ENCODE measurements at regions of chr17 and their contacts with region 1.

Region 1: DNA sequence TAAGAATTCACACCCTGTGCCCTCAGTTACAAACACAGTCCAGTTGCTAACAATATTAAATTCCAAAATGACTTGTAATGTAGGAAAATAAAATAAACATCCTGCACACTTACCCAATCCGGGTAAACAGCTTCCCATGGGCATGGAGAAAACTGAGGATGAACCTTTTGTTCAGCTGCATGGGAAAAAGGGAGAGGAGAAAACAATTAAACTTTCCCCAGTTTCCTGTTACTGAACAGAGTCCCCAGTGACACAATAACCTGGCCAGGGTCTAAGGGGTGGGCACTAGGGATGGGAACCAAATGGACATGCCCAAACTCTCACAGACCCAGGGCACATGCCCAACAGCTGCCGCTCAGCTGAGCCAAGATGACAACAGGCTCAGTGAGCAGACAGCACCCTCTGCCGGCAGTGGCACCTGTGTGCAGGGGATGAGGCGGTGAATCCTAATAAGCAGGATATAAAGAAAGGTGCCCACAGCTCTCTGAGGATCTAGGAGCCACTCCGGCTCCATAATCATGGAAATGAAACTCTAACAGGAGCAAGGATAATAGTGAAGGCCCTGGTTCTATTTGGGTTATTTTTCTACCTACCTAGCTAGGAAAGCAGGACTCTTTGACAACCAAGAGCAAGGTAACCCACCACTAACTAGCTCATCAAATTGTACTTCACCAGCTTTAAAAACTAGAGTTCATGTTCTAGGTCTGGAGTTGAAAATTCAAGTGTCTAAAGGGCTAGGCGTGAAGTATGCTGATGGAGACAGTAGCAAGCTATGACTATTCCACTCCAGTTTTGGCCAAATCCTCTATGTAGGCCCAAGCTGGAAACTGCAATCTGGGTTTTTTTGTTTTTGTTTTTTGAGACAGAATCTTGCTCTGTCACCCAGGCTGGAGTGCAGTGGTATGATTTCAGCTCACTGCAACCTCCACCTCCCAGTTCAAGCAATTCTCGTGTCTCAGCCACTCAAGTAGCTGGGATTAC is 58.8 kb downstream of the SMG6 start:
- DNase-seq: peak; percentile 82
- H3K27ac ChIP-seq: no peak overlapping the region
- CTCF ChIP-seq: peak; percentile 97

Region 2: DNA sequence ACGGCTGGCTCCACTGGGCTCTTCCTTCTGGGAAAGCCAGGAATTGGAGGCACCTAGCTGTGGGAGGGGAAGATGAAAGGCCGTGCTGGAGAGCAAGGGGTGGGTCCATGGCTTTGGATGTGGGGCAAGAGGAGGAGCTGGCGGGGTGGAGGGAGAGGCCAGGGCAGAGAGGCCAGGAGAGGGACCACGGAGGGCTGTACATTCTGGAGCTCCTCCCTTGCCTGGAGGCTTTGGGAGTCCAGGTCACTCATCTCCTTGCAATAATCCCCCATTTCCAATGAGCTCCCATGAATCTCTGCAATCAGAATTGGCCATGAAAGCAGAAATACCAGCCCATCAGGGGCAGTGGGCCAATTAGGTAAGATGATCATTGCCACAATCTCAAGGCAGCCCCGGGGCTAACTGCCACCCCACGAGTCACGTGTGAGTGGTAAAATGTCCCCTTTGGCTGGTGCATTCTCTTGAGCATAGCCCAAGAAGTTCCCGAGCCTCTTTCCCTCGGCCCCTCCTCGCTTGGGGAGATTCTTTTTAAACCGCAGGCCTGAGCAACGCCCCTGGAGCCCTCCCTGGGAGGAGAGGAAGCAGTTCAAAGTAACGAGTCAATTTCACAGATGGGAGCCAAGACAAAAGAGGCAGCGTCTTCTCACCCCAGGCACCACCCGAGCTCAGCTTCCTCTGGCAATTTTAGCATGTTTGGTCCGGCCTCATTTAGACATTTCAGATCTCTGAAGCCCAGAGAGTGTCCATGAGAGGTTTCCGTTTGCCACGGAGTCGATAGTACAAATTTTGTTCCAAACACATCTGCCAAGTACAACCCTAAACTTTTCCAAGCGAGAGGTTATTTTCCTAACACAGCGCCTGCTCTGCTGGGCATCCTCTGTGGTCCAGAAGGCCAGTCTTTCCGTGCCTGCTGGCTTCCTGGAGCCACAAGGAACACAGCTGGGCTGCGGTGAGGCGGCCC is 233.1 kb before region 1 on chr17:
- CTCF ChIA-PET with region 1: no interaction called
- POLR2A ChIA-PET with region 1: no interaction called
- DNase-seq: peak; percentile 67
- H3K27ac ChIP-seq: peak overlapping the region; percentile 94
- CTCF ChIP-seq: no peak

Region 3: GRCh38 chr17:2049333-2050299 is 195.2 kb before region 1 on chr17:
- CTCF ChIA-PET with region 1: interaction called, 84 read pairs
- POLR2A ChIA-PET with region 1: no interaction called
- DNase-seq: peak; percentile 71
- H3K27ac ChIP-seq: peak overlapping the region; percentile 62
- CTCF ChIP-seq: no peak

Region 4: GRCh38 chr17:2054512-2055291 is 190.1 kb before region 1 on chr17 and contains the start of gene HIC1:
- CTCF ChIA-PET with region 1: interaction called, 84 read pairs
- POLR2A ChIA-PET with region 1: no interaction called
- DNase-seq: peak; percentile 81
- H3K27ac ChIP-seq: peak within 1 kb of the TSS; percentile 38; the same call in 1 of the 2 replicates
- CTCF ChIP-seq: peak; percentile 92

Region 5: GRCh38 chr17:2259769-2260536 is 15.1 kb after region 1 on chr17:
- CTCF ChIA-PET with region 1: interaction called, 15 read pairs
- POLR2A ChIA-PET with region 1: interaction called, 5 read pairs
- DNase-seq: no peak
- H3K27ac ChIP-seq: no peak overlapping the region
- CTCF ChIP-seq: no peak

Region 6: DNA sequence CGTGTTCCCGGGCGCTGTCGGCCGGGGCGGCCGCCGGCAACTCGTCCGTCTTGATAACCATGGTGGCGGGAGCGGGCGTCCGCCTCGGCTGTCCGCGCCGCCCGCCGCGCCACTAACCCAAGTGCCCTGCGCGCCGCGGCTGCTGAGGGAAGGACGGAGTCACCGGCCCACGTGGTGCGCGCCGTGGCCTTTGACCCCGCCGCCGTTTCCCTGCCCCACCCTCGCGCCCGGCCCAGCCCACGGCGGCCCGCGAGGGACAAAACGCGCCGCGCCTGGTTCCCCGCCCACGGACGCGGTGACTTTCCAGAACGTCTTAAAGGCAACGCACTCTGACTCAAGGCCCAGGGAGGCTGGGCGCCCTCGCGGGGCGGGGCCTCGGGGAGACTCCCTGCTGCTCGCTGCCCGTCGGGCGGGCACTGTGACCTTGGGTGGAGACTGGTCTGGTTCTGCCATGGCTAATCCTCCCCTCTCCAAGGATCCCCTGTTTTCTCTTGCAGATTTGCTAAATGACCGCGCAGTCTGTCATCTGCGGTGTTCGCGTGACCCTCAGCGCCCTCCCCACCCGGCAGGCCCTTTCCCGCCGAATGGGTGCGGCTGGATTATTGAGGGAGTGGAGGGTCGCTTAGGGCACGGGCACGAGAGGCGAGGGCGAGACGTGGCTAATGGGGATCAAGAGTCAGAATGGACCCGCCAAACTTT is 466.9 kb after region 1 on chr17 and contains the start of gene CLUH:
- CTCF ChIA-PET with region 1: no interaction called
- POLR2A ChIA-PET with region 1: no interaction called
- DNase-seq: peak; percentile 92
- H3K27ac ChIP-seq: peak within 1 kb of the TSS; percentile 85
- CTCF ChIP-seq: no peak